Common myeloid progenitor, CD34-positive (primary cell): ENCODE measurements at regions of chr19 and their contacts with region 1.

Region 1: GRCh38 chr19:43555185-43555770 is 20.0 kb downstream of the XRCC1 start:
- DNase-seq: peak; percentile 79 to 92 (median 87)
- H3K4me3 ChIP-seq: no peak overlapping the region
- H3K27ac ChIP-seq: no peak overlapping the region
- H3K4me1 ChIP-seq: peaks cover 0 to under 1% (median 0%) of the 10 kb centered on the region in 4 experiments
- H3K27me3 ChIP-seq: no peaks in the 10 kb centered on the region

Region 2: GRCh38 chr19:43446746-43447489 is 108.4 kb before region 1 on chr19:
- CTCF ChIA-PET with region 1: no interaction called
- POLR2A ChIA-PET with region 1: no interaction called
- DNase-seq: peak; percentile 67 to 83 (median 79)
- H3K4me3 ChIP-seq: no peak overlapping the region
- H3K27ac ChIP-seq: no peak overlapping the region
- H3K4me1 ChIP-seq: peaks cover 0 to 8% (median 5%) of the 10 kb centered on the region in 4 experiments
- H3K27me3 ChIP-seq: no peaks in the 10 kb centered on the region

Region 3: GRCh38 chr19:43532962-43533545 is 22.2 kb before region 1 on chr19 and contains the start of gene ZNF575:
- CTCF ChIA-PET with region 1: interaction called, 111 read pairs
- POLR2A ChIA-PET with region 1: no interaction called
- DNase-seq: peak; percentile 92 to 96 (median 94)
- H3K4me3 ChIP-seq: peak within 1 kb of the TSS; percentile 69 to 90 (median 76)
- H3K27ac ChIP-seq: peak within 1 kb of the TSS in 1 of 2 experiments; percentile 15
- H3K4me1 ChIP-seq: peaks cover 0 to 29% (median 25%) of the 10 kb centered on the region in 4 experiments
- H3K27me3 ChIP-seq: no peaks in the 10 kb centered on the region

Region 4: DNA sequence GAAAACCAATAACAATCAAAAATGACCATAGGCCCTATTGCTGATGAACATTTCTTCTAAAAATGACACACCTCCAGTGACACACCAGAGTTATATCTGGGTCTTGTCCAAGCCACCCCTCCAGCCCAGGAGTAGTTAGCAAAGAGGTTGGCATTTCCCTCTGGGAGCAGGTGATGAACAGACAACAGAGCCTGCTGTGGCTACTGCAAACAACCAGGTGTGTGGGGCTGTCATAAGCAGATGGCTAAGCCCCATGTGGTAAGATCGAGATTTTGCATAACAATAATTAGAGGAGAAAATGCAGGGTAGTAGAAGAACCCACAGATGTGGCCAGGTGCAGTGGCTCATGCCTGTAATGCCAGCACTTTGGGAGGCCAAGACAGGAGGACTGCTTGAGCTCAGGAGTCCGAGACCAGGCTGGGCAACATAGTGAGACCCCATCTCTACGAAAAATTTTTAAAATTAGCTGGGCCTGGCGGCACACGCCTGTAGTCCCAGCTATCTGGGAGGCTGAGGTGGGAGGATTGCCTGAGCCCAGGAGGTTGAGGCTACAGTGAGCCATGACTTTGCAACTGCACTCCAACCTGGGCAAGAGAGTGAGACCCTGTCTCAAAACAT is 15.0 kb after region 1 on chr19:
- CTCF ChIA-PET with region 1: interaction called, 34 read pairs
- POLR2A ChIA-PET with region 1: no interaction called
- DNase-seq: no peak
- H3K4me3 ChIP-seq: no peak overlapping the region
- H3K27ac ChIP-seq: no peak overlapping the region
- H3K4me1 ChIP-seq: peaks cover 4 to 18% (median 14%) of the 10 kb centered on the region in 4 experiments
- H3K27me3 ChIP-seq: no peaks in the 10 kb centered on the region

Region 5: GRCh38 chr19:43575156-43575950 is 20.1 kb after region 1 on chr19 and contains the starts of genes PINLYP and XRCC1:
- CTCF ChIA-PET with region 1: interaction called, 34 read pairs
- POLR2A ChIA-PET with region 1: no interaction called
- DNase-seq: peak; percentile 99 to 100 (median 99)
- H3K4me3 ChIP-seq: peak within 1 kb of the TSS; percentile 74 to 98 (median 90)
- H3K27ac ChIP-seq: peak within 1 kb of the TSS; percentile 90 to 97
- H3K4me1 ChIP-seq: peaks cover 4 to 30% (median 22%) of the 10 kb centered on the region in 4 experiments
- H3K27me3 ChIP-seq: no peaks in the 10 kb centered on the region

Region 6: GRCh38 chr19:43581467-43581866 is 26.2 kb after region 1 on chr19:
- CTCF ChIA-PET with region 1: interaction called, 247 read pairs
- POLR2A ChIA-PET with region 1: no interaction called
- DNase-seq: no peak
- H3K4me3 ChIP-seq: no peak overlapping the region
- H3K27ac ChIP-seq: no peak overlapping the region
- H3K4me1 ChIP-seq: peaks cover 0 to 28% (median 22%) of the 10 kb centered on the region in 4 experiments
- H3K27me3 ChIP-seq: no peaks in the 10 kb centered on the region

Region 7: DNA sequence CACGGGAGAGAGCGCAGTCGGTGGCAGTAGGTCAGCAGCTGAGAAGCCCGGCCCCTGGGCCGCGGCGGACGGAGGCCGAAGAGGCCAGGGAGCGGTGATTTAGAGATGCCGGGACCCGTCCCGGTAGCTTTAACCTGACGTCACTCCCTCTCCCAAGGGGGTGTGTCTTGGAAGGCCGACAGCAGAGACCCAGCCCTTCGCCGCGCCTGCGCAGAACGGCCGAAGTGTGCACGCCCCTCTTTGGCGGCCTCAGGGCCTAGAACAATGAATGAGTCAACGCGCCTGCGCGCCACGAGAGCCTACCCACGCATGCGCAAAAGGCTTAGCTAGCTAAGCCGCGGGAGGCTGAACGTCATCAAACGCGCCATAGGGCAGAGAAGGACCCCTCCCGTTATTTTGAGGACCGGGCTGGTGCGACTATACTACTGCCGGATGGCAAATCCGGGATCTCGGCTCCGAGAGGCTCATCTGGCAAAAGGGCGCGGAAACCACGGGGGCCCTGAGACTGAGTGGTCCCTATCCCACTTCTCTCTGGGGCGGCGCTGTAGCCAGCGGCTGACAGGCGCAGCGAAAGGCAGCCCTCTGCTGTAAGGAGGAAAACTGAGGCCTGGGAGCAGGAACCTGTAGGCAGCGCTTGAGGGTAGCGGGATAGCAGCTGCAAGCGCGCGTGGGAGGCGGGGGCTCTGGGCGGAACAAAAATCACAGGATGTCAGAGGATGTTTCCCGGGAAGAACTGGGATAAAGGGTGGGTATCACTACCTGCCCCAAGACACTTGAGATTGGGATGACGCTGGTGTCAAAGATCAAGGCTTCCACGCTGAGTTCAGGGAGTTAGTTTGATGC is 40.9 kb after region 1 on chr19 and contains the starts of genes IRGQ and ZNF576:
- CTCF ChIA-PET with region 1: interaction called, 247 read pairs
- POLR2A ChIA-PET with region 1: interaction called, 8 read pairs
- DNase-seq: peak; percentile 99 to 100 (median 99)
- H3K4me3 ChIP-seq: peak within 1 kb of the TSS; percentile 74 to 98 (median 92)
- H3K27ac ChIP-seq: peak within 1 kb of the TSS; percentile 99 to 100
- H3K4me1 ChIP-seq: peaks cover 23 to 43% (median 36%) of the 10 kb centered on the region in 4 experiments
- H3K27me3 ChIP-seq: no peaks in the 10 kb centered on the region

Region 8: DNA sequence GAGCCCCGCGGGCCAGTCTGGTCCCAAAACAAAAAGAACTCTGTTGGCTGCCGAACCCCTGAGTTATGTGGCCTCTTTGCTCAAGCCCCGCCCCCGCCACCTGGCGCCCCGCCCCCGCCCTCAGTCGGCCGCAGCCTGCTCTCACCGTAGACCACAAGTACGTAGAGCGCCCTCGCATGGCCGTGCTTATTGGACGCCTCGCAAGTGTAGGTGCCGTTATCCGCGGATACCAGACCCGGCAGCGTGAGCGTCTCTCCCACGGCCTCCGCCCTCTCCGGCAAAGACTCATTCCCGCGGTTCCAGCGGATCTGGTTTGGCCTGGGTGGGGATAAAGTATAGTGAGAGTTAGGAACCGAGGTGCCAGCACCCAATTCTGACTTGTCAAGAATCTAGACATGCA is 69.7 kb after region 1 on chr19:
- CTCF ChIA-PET with region 1: interaction called, 24 read pairs
- POLR2A ChIA-PET with region 1: no interaction called
- DNase-seq: peak; percentile 87 to 95 (median 93)
- H3K4me3 ChIP-seq: peak overlapping the region in 1 of 7 experiments; percentile 54
- H3K27ac ChIP-seq: no peak overlapping the region
- H3K4me1 ChIP-seq: peaks cover 0 to 18% (median 10%) of the 10 kb centered on the region in 4 experiments
- H3K27me3 ChIP-seq: peaks cover 0 to 21% (median 5%) of the 10 kb centered on the region in 5 experiments